Breast epithelium (tissue), 4 donors: ENCODE measurements at regions of chr18 and their contacts with region 1.

Region 1: GRCh38 chr18:64311859-64312258 is 163.0 kb upstream of the LINC00305 start:
- DNase-seq: no peak
- H3K4me3 ChIP-seq: no peak overlapping the region
- H3K27ac ChIP-seq: no peak overlapping the region
- H3K4me1 ChIP-seq: no peaks in the 10 kb centered on the region
- H3K27me3 ChIP-seq: no peaks in the 10 kb centered on the region
- CTCF ChIP-seq: no peak
- POLR2A ChIP-seq: no peak

Region 2: GRCh38 chr18:64365106-64365505 is 53.2 kb after region 1 on chr18:
- intact Hi-C with region 1: loop called (anchors 2 kb)
- DNase-seq: no peak
- H3K4me3 ChIP-seq: no peak overlapping the region
- H3K27ac ChIP-seq: no peak overlapping the region
- H3K4me1 ChIP-seq: no peaks in the 10 kb centered on the region
- H3K27me3 ChIP-seq: no peaks in the 10 kb centered on the region
- CTCF ChIP-seq: no peak
- POLR2A ChIP-seq: no peak